Thyroid gland (tissue), 4 donors: ENCODE measurements at regions of chr1 and their contacts with region 1.

Region 1: GRCh38 chr1:70685300-70686241 is 274.5 kb downstream of the CTH start:
- DNase-seq: peak; percentile 47 to 50
- H3K4me3 ChIP-seq: no peak overlapping the region
- H3K27ac ChIP-seq: no peak overlapping the region
- H3K4me1 ChIP-seq: no peaks in the 10 kb centered on the region
- H3K27me3 ChIP-seq: no peaks in the 10 kb centered on the region
- CTCF ChIP-seq: peak; percentile 52 to 84 (median 64)
- POLR2A ChIP-seq: no peak

Region 2: DNA sequence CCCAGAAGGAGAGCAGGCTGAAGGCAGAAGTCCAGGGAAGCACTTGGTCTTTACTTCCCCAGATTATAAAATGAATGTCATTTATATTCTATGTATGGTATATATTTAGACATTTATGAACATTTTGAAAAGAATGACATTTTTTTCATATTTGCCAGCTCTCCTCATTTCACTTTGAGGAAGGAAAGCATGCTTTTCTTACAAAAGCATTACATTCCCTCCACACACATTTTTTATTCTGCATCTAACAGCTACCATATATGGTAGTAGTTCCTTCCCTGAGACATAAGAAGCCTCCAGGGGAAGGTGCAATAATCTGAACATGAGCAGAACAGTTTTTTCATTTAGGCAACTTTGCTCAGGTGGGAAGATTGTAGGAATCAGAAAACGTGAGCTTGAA is 1023.9 kb before region 1 on chr1:
- intact Hi-C with region 1: no loop called
- DNase-seq: no peak
- H3K4me3 ChIP-seq: no peak overlapping the region
- H3K27ac ChIP-seq: peak overlapping the region in 1 of 3 donors; percentile 20
- H3K4me1 ChIP-seq: peaks cover 3 to 15% of the 10 kb centered on the region in 2 donors
- H3K27me3 ChIP-seq: no peaks in the 10 kb centered on the region
- CTCF ChIP-seq: no peak
- POLR2A ChIP-seq: no peak

Region 3: DNA sequence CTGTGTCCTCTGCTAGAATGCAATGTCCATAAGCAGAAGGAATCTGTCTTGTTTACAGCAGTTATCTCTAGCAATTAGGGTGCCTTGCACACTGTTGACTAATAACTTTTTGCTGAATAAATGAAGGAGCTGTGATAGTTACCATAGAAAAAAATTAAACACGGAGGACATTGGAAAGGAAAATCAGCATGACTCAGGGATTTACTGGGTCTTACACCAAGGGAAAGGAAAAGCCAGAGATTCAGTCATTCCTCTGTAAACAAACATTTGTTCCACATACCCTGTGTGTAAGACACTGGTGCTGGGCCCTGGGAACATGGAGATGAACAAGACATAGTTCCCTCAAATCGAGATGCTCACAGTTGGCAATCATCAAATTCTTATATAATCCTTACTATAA is 178.7 kb after region 1 on chr1:
- intact Hi-C with region 1: no loop called
- DNase-seq: no peak
- H3K4me3 ChIP-seq: no peak overlapping the region
- H3K27ac ChIP-seq: no peak overlapping the region
- H3K4me1 ChIP-seq: no peaks in the 10 kb centered on the region
- H3K27me3 ChIP-seq: no peaks in the 10 kb centered on the region
- CTCF ChIP-seq: no peak
- POLR2A ChIP-seq: no peak

Region 4: DNA sequence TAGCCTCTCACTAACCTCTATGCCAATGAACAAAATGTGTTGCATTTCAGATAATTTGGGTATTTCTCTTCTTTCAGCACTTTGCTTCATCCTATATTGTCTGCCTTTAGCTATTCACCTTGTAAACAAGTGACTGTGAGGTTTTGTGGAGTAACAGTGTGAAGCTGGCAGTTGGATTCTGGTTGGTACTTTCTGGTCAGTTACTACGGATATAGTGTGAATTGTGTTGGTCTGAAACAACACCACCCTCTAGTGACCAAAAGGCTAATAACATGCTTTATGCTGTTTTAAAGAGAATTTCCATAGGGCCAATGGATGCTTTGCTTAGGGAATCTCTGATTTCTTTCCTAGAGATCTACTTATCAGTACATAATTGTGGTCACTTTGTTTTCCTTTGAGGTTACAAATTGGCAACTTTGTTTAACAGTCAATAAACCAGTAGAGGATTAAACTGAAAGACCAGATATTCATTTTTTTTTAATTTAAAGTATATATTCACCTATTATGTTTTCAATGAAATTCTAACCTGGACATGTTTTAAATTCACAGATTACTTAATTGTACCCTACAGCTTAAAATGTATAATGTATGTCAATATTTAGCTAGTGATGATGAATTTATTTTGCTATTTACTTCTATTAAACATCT is 364.5 kb after region 1 on chr1:
- intact Hi-C with region 1: loop called (anchors 5 kb)
- DNase-seq: no peak
- H3K4me3 ChIP-seq: no peak overlapping the region
- H3K27ac ChIP-seq: no peak overlapping the region
- H3K4me1 ChIP-seq: peaks cover 5 to 20% of the 10 kb centered on the region in 2 donors
- H3K27me3 ChIP-seq: peaks cover 8% of the 10 kb centered on the region
- CTCF ChIP-seq: peak; percentile 51 to 77 (median 62)
- POLR2A ChIP-seq: no peak